Dorsolateral prefrontal cortex (tissue), 120 donors: ENCODE measurements at regions of chr11 and their contacts with region 1.

Region 1: GRCh38 chr11:10514210-10514609 is 26.8 kb downstream of the RNF141 start:
- DNase-seq: no peak
- H3K4me3 ChIP-seq: no peak overlapping the region
- H3K27ac ChIP-seq: peak overlapping the region in 43 of 59 donors; percentile 4 to 95 (median 50)
- H3K27me3 ChIP-seq: no peaks in the 10 kb centered on the region
- CTCF ChIP-seq: peak in 48 of 56 donors; percentile 15 to 64 (median 44)

Region 2: DNA sequence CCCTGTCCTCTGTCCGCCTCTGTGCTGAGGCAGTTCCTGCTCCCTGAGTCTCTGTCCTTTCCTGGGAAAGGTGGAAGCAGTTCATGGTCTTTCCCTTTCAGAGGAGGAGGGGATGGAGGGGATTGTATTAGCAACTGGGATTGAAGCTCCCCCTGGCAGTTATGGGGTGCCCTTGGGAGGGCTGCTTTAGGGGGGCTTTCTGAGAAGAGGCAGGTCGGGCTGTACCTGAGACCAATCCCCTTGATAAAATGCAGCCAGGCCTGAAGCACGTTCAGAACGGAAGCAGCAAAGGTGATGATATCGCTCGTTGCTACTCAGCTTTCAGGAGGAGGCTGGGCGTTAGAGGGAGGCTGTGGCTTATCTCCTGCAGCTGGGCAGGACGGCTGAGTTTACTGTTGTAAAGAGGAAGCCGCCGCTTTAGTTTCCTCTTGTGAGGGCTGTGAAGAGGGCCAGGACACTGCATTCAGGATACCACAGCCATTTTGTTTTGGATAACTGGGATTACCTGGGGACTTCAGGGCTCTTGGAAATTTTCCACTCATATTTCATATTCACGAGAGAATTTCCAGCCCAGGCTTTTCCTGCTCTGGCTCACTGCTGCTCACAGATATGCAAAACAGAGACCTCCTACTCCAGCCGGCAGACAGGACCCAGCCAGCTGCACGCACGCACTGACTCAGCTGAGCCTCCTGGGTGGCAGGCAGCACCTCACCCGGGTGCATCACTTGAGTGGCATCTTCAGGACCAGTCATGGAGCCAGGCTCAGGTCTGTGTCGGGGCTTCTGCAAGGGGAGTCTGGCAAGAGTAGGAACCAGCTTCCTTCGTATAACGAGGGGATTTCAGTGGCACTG is 58.3 kb before region 1 on chr11:
- intact Hi-C with region 1: loop called in 1 of 2 experiments (anchors 10 kb)
- DNase-seq: peak in 6 of 10 donors; percentile 50 to 84 (median 66)
- H3K4me3 ChIP-seq: peak overlapping the region; percentile 1 to 67 (median 45)
- H3K27ac ChIP-seq: peak overlapping the region; percentile 63 to 100 (median 94)
- H3K27me3 ChIP-seq: no peaks in the 10 kb centered on the region
- CTCF ChIP-seq: no peak

Region 3: GRCh38 chr11:10653926-10654810 is 140.0 kb after region 1 on chr11:
- intact Hi-C with region 1: loop called in 1 of 2 experiments (anchors 5 kb)
- DNase-seq: no peak
- H3K4me3 ChIP-seq: no peak overlapping the region
- H3K27ac ChIP-seq: peak overlapping the region in 29 of 59 donors; percentile 4 to 71 (median 35)
- H3K27me3 ChIP-seq: no peaks in the 10 kb centered on the region
- CTCF ChIP-seq: peak; percentile 40 to 88 (median 75)